Activated B cell treated with CpG ODN at 0.5 μM for 24 hours (primary cell): ENCODE measurements at regions of chr9 and their contacts with region 1.

Region 1: DNA sequence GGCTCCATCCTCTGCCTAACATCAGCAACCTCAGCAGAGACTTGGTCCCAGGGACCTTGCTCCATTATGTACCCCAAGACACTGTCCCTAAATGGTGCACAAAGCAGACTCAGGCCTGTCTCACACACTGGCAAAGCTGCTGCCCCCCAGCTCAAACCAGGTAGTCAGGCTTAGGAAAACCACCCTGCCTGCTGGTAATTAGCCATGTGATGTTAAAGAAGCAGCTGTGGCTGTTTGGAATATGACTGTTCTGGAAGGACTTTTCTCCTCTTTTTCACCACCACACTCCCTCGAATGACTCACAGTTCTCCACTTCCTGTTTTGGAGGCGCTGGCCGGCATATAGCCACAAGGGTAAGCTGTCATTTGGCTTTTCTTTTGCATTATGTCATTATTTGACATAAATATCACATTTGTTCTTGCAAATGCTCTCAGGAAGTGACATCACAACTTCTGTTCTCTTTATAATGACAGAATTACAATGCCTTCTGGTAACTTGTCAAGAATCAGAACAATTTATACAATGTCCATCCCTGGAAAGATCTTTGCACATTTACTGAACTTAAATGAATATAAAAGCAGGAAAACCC is 113.9 kb downstream of the SUSD1 start:
- DNase-seq: no peak
- ATAC-seq: peak; percentile 70
- H3K4me3 Mint-ChIP-seq: no peak overlapping the region
- H3K27ac Mint-ChIP-seq: peak overlapping the region; percentile 85
- H3K4me1 Mint-ChIP-seq: peaks cover 67% of the 10 kb centered on the region
- H3K27me3 Mint-ChIP-seq: no peaks in the 10 kb centered on the region
- CTCF ChIP-seq: no peak

Region 2: DNA sequence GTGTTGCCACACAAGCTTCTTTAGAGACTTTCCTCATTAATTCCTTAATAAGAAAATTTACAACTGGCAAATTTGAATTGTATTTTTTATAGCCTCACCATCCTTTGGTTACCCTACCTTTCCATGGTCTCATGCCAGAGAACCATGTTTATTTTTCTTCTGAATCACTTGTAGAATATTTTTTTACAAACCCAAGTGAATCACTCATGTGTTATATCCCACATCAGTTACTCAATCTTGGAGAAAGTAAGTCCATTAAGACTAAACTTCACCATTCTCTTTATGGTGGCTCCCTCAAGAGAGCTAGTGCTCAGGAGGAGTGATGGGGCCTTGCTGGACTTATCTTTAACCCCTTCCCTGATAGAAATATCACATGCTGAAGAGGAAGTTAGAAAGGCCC is 15.1 kb before region 1 on chr9:
- CTCF ChIA-PET with region 1: interaction called, 3 read pairs
- POLR2A ChIA-PET with region 1: interaction called, 6 read pairs
- intact Hi-C with region 1: loop called (anchors 1 kb)
- DNase-seq: no peak
- ATAC-seq: no peak
- H3K4me3 Mint-ChIP-seq: no peak overlapping the region
- H3K27ac Mint-ChIP-seq: no peak overlapping the region
- H3K4me1 Mint-ChIP-seq: peaks cover 40% of the 10 kb centered on the region
- H3K27me3 Mint-ChIP-seq: no peaks in the 10 kb centered on the region
- CTCF ChIP-seq: no peak